HCT116 (cell line): ENCODE measurements at regions of chr5 and their contacts with region 1.

Region 1: GRCh38 chr5:31809050-31809870 is 170.3 kb downstream of the PDZD2 start:
- DNase-seq: peak; percentile 68
- ATAC-seq: peak; percentile 97
- H3K4me3 ChIP-seq: no peak overlapping the region
- H3K27ac ChIP-seq: no peak overlapping the region
- H3K4me1 ChIP-seq: peaks cover 0 to 14% of the 10 kb centered on the region in 2 experiments; a peak in 2 of 4 replicates
- H3K27me3 ChIP-seq: peaks cover 9% of the 10 kb centered on the region
- CTCF ChIP-seq: peak; percentile 80 to 96 (median 84)
- POLR2A ChIP-seq: no peak
- RAD21 ChIP-seq: peak; percentile 87

Region 2: GRCh38 chr5:31581498-31582099 is 227.7 kb before region 1 on chr5:
- CTCF ChIA-PET with region 1: interaction called, 8 read pairs
- POLR2A ChIA-PET with region 1: no interaction called
- RAD21 ChIA-PET with region 1: no interaction called
- intact Hi-C with region 1: loop called (anchors 1 kb)
- DNase-seq: peak; percentile 22
- ATAC-seq: no peak
- H3K4me3 ChIP-seq: no peak overlapping the region
- H3K27ac ChIP-seq: no peak overlapping the region
- H3K4me1 ChIP-seq: no peaks in the 10 kb centered on the region
- H3K27me3 ChIP-seq: peaks cover 5% of the 10 kb centered on the region
- CTCF ChIP-seq: peak; percentile 31 to 62 (median 52); a peak in 5 of 6 replicates
- POLR2A ChIP-seq: no peak
- RAD21 ChIP-seq: peak; percentile 71

Region 3: GRCh38 chr5:32182463-32183081 is 373.3 kb after region 1 on chr5:
- CTCF ChIA-PET with region 1: no interaction called
- POLR2A ChIA-PET with region 1: no interaction called
- RAD21 ChIA-PET with region 1: no interaction called
- intact Hi-C with region 1: no loop called
- DNase-seq: no peak
- ATAC-seq: no peak
- H3K4me3 ChIP-seq: no peak overlapping the region
- H3K27ac ChIP-seq: no peak overlapping the region
- H3K4me1 ChIP-seq: no peaks in the 10 kb centered on the region
- H3K27me3 ChIP-seq: no peaks in the 10 kb centered on the region
- CTCF ChIP-seq: no peak
- POLR2A ChIP-seq: no peak
- RAD21 ChIP-seq: no peak

Region 4: GRCh38 chr5:32928761-32929160 is 1119.5 kb after region 1 on chr5:
- CTCF ChIA-PET with region 1: no interaction called
- POLR2A ChIA-PET with region 1: no interaction called
- RAD21 ChIA-PET with region 1: no interaction called
- intact Hi-C with region 1: no loop called
- DNase-seq: no peak
- ATAC-seq: no peak
- H3K4me3 ChIP-seq: no peak overlapping the region
- H3K27ac ChIP-seq: no peak overlapping the region
- H3K4me1 ChIP-seq: no peaks in the 10 kb centered on the region
- H3K27me3 ChIP-seq: no peaks in the 10 kb centered on the region
- CTCF ChIP-seq: no peak
- POLR2A ChIP-seq: no peak
- RAD21 ChIP-seq: no peak